ENCODE measurements at regions of chr21 and their contacts with region 1.

Region 1: GRCh38 chr21:36859744-36860501 is 106.5 kb downstream of the HLCS start:
- DNase-seq: peak; percentile 71 to 85
- H3K4me3 ChIP-seq: no peak overlapping the region
- H3K4me3 Mint-ChIP-seq: no peak overlapping the region
- H3K27ac Mint-ChIP-seq: no peak overlapping the region
- H3K4me1 ChIP-seq: peaks cover 37% of the 10 kb centered on the region
- H3K4me1 Mint-ChIP-seq: peaks cover 25% of the 10 kb centered on the region
- H3K27me3 ChIP-seq: no peaks in the 10 kb centered on the region
- H3K27me3 Mint-ChIP-seq: no peaks in the 10 kb centered on the region
- CTCF ChIP-seq: no peak

Region 2: DNA sequence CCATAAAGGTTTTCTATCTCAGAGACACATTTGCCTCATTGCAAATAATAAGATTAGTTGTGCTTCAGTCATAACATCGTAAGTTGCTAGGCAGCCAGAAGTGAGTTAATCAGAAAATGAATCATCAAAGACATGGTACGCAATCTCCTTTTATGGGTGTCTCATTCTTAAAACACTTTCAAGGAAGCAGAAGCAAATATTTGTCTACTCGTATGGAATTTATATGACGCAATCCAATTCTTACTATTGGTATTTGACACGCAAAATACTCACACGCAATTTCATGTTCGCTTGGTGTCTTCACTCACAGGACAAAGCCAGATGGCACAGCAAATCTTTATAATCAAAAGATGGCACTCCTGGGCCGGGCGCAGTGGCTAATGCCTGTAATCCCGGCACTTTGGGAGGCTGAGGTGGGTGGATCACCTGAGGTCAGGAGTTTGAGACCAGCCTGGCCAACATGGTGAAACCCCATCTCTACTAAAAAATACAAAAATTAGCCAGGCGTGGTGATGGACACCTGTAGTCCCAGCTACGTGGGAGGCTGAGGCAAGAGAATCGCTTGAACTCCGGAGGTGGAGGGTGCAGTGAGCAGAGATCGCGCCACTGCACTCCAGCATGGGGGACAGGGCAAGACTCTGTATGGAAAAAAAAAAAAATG is 50.1 kb after region 1 on chr21:
- CTCF ChIA-PET with region 1: no interaction called
- POLR2A ChIA-PET with region 1: no interaction called
- intact Hi-C with region 1: loop called (anchors 1 kb)
- DNase-seq: peak; percentile 59 to 78
- H3K4me3 ChIP-seq: no peak overlapping the region
- H3K4me3 Mint-ChIP-seq: peak overlapping the region; percentile 57
- H3K27ac Mint-ChIP-seq: peak overlapping the region; percentile 99
- H3K4me1 ChIP-seq: peaks cover 26% of the 10 kb centered on the region
- H3K4me1 Mint-ChIP-seq: peaks cover 10% of the 10 kb centered on the region
- H3K27me3 ChIP-seq: no peaks in the 10 kb centered on the region
- H3K27me3 Mint-ChIP-seq: no peaks in the 10 kb centered on the region
- CTCF ChIP-seq: no peak

Region 3: GRCh38 chr21:36917471-36918158 is 57.7 kb after region 1 on chr21:
- CTCF ChIA-PET with region 1: interaction called, 32 read pairs
- POLR2A ChIA-PET with region 1: interaction called, 4 read pairs
- intact Hi-C with region 1: no loop called
- DNase-seq: peak; percentile 60 to 65
- H3K4me3 ChIP-seq: no peak overlapping the region
- H3K4me3 Mint-ChIP-seq: no peak overlapping the region
- H3K27ac Mint-ChIP-seq: no peak overlapping the region
- H3K4me1 ChIP-seq: peaks cover 17% of the 10 kb centered on the region
- H3K4me1 Mint-ChIP-seq: peaks cover 12% of the 10 kb centered on the region
- H3K27me3 ChIP-seq: no peaks in the 10 kb centered on the region
- H3K27me3 Mint-ChIP-seq: no peaks in the 10 kb centered on the region
- CTCF ChIP-seq: peak; percentile 69 to 82

Region 4: GRCh38 chr21:36948686-36949085 is 88.8 kb after region 1 on chr21:
- CTCF ChIA-PET with region 1: no interaction called
- POLR2A ChIA-PET with region 1: no interaction called
- intact Hi-C with region 1: no loop called
- DNase-seq: no peak
- H3K4me3 ChIP-seq: no peak overlapping the region
- H3K4me3 Mint-ChIP-seq: no peak overlapping the region
- H3K27ac Mint-ChIP-seq: no peak overlapping the region
- H3K4me1 ChIP-seq: no peaks in the 10 kb centered on the region
- H3K4me1 Mint-ChIP-seq: no peaks in the 10 kb centered on the region
- H3K27me3 ChIP-seq: no peaks in the 10 kb centered on the region
- H3K27me3 Mint-ChIP-seq: no peaks in the 10 kb centered on the region
- CTCF ChIP-seq: no peak